ENCODE measurements at regions of chr10 and their contacts with region 1.

Region 1: DNA sequence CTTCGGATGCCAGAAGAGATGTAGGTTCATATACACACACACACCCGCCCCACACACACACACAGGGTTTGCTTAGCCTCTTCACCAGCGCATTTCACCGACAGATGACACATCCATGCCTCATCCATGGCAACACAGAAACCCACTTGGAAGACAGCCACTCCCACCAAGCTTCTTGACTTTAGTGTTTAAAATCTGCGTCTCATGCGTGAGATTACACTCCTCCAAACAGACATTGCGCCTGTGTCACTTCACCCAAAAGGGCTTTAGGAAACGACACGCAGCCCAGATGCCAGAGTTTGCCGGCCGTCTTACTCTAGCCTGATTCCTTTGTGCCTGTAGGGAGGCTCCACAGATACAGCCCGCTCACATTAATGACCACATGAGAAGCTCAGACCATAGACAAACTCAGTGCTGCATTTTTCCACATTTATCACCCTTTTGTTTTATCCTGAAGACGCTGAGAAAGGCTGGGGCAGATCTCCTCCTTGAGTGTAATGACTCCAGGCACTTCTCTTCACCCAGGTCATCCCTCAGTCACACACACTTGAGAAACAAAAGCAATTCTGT is 73.8 kb downstream of the DIP2C start:
- DNase-seq: no peak
- ATAC-seq: no peak
- H3K4me3 ChIP-seq: no peak overlapping the region
- H3K27ac ChIP-seq: no peak overlapping the region
- H3K4me1 ChIP-seq: peaks cover 72% of the 10 kb centered on the region
- H3K27me3 ChIP-seq: no peaks in the 10 kb centered on the region
- CTCF ChIP-seq: no peak

Region 2: GRCh38 chr10:588241-589165 is 27.2 kb before region 1 on chr10:
- intact Hi-C with region 1: loop called in 1 of 2 experiments (anchors 2 kb)
- DNase-seq: peak; percentile 60 to 84
- ATAC-seq: peak; percentile 83 to 90 (median 88)
- H3K4me3 ChIP-seq: peak overlapping the region; percentile 5
- H3K27ac ChIP-seq: peak overlapping the region; percentile 21
- H3K4me1 ChIP-seq: peaks cover 47% of the 10 kb centered on the region
- H3K27me3 ChIP-seq: no peaks in the 10 kb centered on the region
- CTCF ChIP-seq: peak; percentile 43

Region 3: DNA sequence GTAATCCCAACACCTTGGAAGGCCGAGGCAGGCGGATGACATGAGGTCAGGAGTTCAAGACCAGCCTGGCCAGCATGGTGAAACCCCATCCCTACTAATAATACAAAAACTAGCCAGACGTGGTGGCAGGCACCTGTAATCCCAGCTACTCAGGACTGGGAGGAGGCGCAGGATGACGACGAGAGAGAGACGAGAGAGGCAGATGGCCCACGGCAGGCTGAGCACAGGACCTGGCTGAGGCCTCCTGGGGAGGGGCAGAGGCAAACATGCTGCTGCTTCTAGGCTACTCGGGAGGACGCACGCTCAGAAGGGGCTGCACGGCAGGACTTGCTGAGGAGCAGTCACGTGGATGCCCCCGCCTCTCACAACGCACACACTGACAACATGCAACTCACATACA is 51.4 kb after region 1 on chr10:
- intact Hi-C with region 1: no loop called
- DNase-seq: no peak
- ATAC-seq: peak in 3 of 4 donors; percentile 35 to 55 (median 37)
- H3K4me3 ChIP-seq: no peak overlapping the region
- H3K27ac ChIP-seq: no peak overlapping the region
- H3K4me1 ChIP-seq: peaks cover 33% of the 10 kb centered on the region
- H3K27me3 ChIP-seq: peaks cover 0 to 3% (median 0%) of the 10 kb centered on the region in 3 donors
- CTCF ChIP-seq: no peak

Measured in psoas muscle (tissue), 8 donors.